ENCODE measurements at regions of chr1 and their contacts with region 1.

Region 1: DNA sequence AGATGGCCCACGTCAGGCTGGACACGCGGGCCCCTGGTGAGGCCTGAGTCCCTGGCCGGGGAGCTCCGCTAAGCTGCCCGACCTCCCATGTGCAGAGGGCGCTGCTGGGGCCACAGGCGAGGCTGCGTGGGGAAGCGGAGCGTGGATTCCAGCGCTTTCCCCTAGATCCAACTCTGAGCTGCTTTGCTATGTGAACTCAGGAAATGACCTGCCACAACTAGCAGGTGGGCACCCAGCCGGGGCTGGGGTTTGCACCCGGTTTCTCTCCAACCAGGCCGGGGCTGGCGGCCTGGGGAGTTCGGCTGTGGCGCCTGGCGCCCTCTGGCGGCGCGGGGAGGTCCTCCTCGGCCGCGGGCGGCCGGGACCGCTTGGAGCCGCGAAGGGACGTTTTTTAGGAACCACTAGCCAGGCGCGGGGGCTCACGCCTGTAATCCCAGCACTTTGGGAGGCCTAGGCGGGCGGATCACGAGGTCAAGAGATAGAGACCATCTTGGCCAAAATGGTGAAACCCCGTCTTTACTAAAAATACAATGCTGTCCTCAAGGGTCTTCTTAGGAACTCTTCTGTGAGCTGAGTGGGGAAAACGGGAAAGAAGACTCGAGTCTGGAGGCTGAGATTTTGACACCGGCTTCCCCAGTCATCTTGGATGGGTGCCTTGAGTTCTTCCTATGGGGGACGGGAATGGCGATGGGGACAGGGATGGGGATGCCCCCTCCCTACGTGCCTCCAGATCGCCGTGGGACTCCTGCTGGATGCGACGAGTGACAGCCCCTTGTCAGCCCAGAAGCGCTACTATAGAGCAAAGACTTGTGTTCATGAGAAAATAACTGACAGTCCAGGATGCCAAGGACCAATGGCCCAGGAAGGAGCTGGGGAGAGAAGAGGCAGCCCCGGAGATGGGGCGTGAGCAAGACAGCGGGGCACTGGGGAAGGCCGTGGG is 12.6 kb downstream of the PYCR2 start:
- DNase-seq: peak; percentile 90
- ATAC-seq: peak; percentile 84

Region 2: GRCh38 chr1:225474986-225475820 is 436.3 kb before region 1 on chr1:
- intact Hi-C with region 1: loop called (anchors 1 kb)
- DNase-seq: peak; percentile 91
- ATAC-seq: peak; percentile 90

Region 3: DNA sequence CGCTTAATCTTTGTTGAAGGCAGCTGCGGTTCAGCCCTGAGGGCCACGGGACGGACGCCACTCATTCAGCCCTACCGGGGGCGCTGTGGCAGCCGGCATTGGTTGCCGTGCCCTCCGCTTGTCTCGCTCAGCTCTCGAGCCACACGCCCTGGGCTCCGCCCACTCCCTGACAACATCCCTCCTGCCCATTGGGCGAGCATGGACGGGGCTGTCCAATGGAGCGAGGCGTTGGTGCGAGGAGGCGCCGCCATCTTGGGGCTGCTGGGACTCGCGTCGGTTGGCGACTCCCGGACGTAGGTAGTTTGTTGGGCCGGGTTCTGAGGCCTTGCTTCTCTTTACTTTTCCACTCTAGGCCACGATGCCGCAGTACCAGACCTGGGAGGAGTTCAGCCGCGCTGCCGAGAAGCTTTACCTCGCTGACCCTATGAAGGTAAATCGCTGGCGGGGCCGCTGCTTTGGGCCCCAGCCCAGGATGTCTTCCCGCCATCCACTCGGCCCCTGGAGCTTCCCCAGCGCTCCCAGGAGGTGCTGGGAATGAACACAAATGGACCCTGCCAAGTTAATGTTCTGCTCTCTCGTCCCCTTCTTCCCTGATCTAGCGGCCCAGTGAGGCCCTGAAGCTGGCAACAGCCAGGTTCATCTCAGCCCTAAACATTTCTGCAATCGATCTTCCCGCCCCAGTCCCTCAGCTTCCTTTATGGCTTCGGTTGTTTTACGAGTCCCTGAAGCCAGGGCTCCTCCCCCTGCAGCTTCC is 133.7 kb before region 1 on chr1 and contains the start of gene SRP9:
- intact Hi-C with region 1: loop called (anchors 5 kb)
- DNase-seq: peak; percentile 99
- ATAC-seq: peak; percentile 100
- total RNA-seq, gene SRP9: 192 TPM

Region 4: GRCh38 chr1:225808136-225808535 is 103.3 kb before region 1 on chr1:
- intact Hi-C with region 1: no loop called
- DNase-seq: no peak
- ATAC-seq: no peak

Region 5: GRCh38 chr1:225845571-225846259 is 65.7 kb before region 1 on chr1:
- intact Hi-C with region 1: loop called (anchors 5 kb)
- DNase-seq: peak; percentile 86
- ATAC-seq: peak; percentile 83

Region 6: GRCh38 chr1:225881969-225882693 is 29.3 kb before region 1 on chr1 and contains the start of gene TMEM63A:
- intact Hi-C with region 1: loop called (anchors 2 kb)
- DNase-seq: peak; percentile 96
- ATAC-seq: peak; percentile 94
- total RNA-seq, gene TMEM63A: 30.6 TPM

Region 7: GRCh38 chr1:225977937-225978748 is 66.7 kb after region 1 on chr1:
- intact Hi-C with region 1: loop called (anchors 5 kb)
- DNase-seq: no peak
- ATAC-seq: no peak